ENCODE measurements at regions of chr4 and their contacts with region 1.

Region 1: GRCh38 chr4:153127760-153128494 is 76.3 kb upstream of the TRIM2 start:
- DNase-seq: no peak
- ATAC-seq: peak; percentile 94
- H3K4me3 ChIP-seq: no peak overlapping the region
- H3K27ac ChIP-seq: 0 out of 2 replicates have a peak overlapping the region, but pooled peaks have one; percentile 29
- H3K4me1 ChIP-seq: no peaks in the 10 kb centered on the region; the same call in 1 of the 2 replicates
- H3K27me3 ChIP-seq: no peaks in the 10 kb centered on the region
- CTCF ChIP-seq: peak; percentile 82

Region 2: DNA sequence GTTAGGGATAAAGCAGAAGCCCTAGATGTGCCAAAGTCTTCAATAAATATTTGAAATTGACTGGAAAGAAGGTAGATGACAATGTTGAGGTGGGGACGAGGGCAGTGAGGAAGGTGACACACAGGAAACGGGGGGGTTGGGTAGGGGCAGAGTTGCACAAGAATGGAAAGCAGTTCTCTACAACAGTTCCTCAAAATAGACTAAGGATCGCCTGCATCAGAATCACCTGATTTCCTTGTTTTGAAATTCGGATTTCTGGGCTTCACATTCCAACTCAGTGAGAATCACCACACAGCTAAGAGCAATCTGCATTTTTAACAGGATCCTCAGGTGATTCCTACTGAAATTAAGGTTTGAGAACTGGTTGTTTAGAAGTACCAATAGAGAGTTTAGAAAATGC is 277.6 kb before region 1 on chr4:
- CTCF ChIA-PET with region 1: no interaction called
- POLR2A ChIA-PET with region 1: no interaction called
- in situ Hi-C with region 1: no loop called
- intact Hi-C with region 1: loop called (anchors 5 kb)
- DNase-seq: peak; percentile 17
- ATAC-seq: no peak
- H3K4me3 ChIP-seq: no peak overlapping the region
- H3K27ac ChIP-seq: no peak overlapping the region
- H3K4me1 ChIP-seq: no peaks in the 10 kb centered on the region; the same call in 1 of the 2 replicates
- H3K27me3 ChIP-seq: no peaks in the 10 kb centered on the region
- CTCF ChIP-seq: no peak

Region 3: DNA sequence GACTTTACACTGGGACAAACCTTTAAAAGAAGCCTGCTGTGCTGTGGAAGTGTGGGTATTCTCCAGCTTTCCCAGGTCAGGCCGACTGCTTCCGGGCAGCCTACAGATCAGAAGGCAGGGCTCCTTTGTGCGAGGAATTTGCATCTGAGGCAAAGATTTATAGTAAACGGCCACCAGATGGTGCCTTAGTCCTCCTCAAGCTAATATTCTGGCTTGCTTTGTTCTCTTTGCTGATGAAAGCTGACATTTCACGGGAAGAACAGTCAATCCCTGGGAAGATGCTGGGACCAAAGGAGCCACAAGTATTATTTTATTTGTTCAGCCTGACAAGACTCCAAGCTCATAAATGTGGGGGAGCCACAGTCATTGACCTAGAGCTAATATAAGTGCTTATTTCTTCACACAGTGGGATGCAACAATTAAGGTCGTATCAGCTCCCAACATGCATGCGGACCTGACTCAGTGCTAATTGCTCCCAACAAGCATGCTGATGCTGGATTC is 44.4 kb before region 1 on chr4:
- CTCF ChIA-PET with region 1: interaction called, 30 read pairs
- POLR2A ChIA-PET with region 1: no interaction called
- in situ Hi-C with region 1: no loop called
- intact Hi-C with region 1: loop called (anchors 1 kb)
- DNase-seq: peak; percentile 42
- ATAC-seq: peak; percentile 88
- H3K4me3 ChIP-seq: no peak overlapping the region
- H3K27ac ChIP-seq: no peak overlapping the region
- H3K4me1 ChIP-seq: 0 out of 2 replicates have a peak, but pooled peaks cover 3% of the 10 kb centered on the region
- H3K27me3 ChIP-seq: no peaks in the 10 kb centered on the region
- CTCF ChIP-seq: peak; percentile 68

Region 4: GRCh38 chr4:153099391-153100140 is 28.4 kb before region 1 on chr4:
- CTCF ChIA-PET with region 1: no interaction called
- POLR2A ChIA-PET with region 1: no interaction called
- in situ Hi-C with region 1: no loop called
- intact Hi-C with region 1: no loop called
- DNase-seq: no peak
- ATAC-seq: no peak
- H3K4me3 ChIP-seq: no peak overlapping the region
- H3K27ac ChIP-seq: no peak overlapping the region
- H3K4me1 ChIP-seq: no peaks in the 10 kb centered on the region
- H3K27me3 ChIP-seq: no peaks in the 10 kb centered on the region
- CTCF ChIP-seq: no peak

Region 5: DNA sequence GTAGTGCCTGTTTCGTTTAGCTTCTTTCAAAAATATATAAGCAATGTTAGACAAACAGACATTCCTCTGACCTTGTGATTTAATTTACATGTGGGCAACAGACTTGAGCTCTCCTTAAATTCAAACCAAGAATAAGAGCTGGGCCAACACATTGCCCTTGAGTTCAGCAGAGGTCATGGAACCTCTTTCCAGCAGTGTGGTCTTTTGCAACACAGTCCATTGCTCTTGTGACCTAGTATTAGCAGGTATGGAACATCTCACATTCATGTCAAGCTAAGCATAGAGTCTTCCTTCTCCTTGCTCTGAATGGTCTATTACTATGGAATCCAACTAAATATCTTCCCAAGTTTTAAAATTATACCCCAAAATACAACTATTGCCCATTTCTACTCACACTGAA is 182.9 kb after region 1 on chr4:
- CTCF ChIA-PET with region 1: no interaction called
- POLR2A ChIA-PET with region 1: interaction called, 13 read pairs
- in situ Hi-C with region 1: no loop called
- intact Hi-C with region 1: no loop called
- DNase-seq: no peak
- ATAC-seq: no peak
- H3K4me3 ChIP-seq: no peak overlapping the region
- H3K27ac ChIP-seq: no peak overlapping the region
- H3K4me1 ChIP-seq: no peaks in the 10 kb centered on the region
- H3K27me3 ChIP-seq: no peaks in the 10 kb centered on the region
- CTCF ChIP-seq: no peak